Psoas muscle (tissue), 8 donors: ENCODE measurements at regions of chr1 and their contacts with region 1.

Region 1: DNA sequence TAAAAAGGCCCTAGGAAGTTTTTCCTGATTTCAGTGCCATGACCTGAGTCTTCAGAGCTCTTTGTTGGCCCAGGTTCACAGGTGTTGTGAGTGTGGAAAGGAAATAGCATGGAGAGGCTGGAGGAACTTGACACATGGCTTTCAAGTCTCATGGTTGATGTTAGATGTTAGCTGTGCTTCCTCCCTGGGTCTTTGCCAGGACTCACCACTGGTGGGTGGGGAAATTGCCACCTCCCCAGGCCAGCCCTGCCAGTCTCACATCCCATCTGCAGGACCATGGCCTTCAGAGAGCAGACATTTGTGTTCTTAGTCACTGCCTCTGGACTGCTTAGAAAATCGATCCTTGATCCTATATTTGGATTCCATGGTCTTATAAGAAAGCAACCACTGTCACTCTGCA is 383.2 kb downstream of the DISC1 start:
- DNase-seq: no peak
- ATAC-seq: no peak
- H3K4me3 ChIP-seq: no peak overlapping the region
- H3K27ac ChIP-seq: no peak overlapping the region
- H3K4me1 ChIP-seq: no peaks in the 10 kb centered on the region
- H3K27me3 ChIP-seq: no peaks in the 10 kb centered on the region
- CTCF ChIP-seq: no peak

Region 2: DNA sequence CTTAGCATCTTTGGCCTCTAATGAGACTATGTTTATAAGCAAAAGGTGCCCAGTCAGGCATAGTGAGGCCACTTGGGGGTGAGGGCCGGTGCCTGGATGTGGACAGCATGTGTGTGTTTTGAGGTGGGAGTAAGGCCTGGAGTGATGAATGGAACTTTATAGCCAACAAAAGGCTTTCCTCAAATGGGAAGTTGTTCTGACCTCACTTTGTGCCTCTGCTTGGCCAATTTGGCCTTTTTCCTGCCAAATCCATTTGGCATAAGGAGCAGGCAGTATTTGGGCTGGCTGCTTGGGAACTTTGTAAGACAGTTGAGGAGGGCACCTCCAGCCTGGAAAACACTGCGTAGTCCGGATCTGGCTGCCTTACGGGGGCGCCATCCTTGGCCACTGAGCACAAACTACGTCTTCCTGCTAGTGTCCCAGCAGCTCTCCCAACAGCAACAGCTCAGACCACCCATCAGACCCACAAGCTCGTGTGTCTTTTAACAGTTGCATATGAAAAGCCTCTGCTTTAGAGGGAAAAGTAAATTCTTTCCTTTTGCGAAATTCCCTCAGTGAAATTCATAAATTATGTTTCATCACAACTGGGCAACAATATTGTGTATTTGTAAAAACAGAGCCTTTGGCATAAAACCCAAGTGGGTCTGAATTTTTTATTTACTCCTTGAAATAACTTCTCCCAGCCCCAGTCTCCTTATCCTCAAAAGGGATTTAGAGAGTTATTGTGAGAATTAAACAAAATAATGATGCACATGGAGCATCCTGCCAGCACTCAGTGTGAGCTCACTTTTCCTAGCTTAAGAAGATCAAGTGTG is 60.3 kb before region 1 on chr1:
- intact Hi-C with region 1: no loop called
- DNase-seq: peak; percentile 44 to 72
- ATAC-seq: peak; percentile 34 to 71 (median 40)
- H3K4me3 ChIP-seq: no peak overlapping the region
- H3K27ac ChIP-seq: no peak overlapping the region
- H3K4me1 ChIP-seq: no peaks in the 10 kb centered on the region
- H3K27me3 ChIP-seq: no peaks in the 10 kb centered on the region
- CTCF ChIP-seq: no peak

Region 3: DNA sequence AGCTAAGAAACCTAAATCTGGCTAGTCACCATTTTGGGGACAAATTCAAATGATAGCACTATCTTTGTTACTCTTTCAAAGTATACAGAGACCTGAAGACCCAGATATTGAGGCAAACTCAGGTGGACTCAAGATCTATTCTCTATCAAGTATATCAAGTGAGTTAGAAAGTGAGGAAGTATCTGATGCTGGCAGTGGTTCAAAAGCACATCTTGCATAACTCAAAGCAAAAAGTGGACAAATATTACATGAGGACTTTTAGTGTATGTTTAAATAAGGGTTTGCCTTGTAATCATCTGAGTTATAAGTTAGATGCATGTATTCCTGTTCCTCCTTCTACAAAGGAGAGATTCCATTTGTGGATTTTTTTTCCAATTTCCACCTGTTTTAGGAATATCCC is 44.8 kb before region 1 on chr1:
- intact Hi-C with region 1: loop called in 1 of 2 experiments (anchors 1 kb)
- DNase-seq: no peak
- ATAC-seq: no peak
- H3K4me3 ChIP-seq: no peak overlapping the region
- H3K27ac ChIP-seq: no peak overlapping the region
- H3K4me1 ChIP-seq: no peaks in the 10 kb centered on the region
- H3K27me3 ChIP-seq: no peaks in the 10 kb centered on the region
- CTCF ChIP-seq: no peak

Region 4: GRCh38 chr1:232066521-232066920 is 56.8 kb after region 1 on chr1:
- intact Hi-C with region 1: no loop called
- DNase-seq: no peak
- ATAC-seq: no peak
- H3K4me3 ChIP-seq: no peak overlapping the region
- H3K27ac ChIP-seq: no peak overlapping the region
- H3K4me1 ChIP-seq: no peaks in the 10 kb centered on the region
- H3K27me3 ChIP-seq: peaks cover 0 to 2% (median 0%) of the 10 kb centered on the region in 3 donors
- CTCF ChIP-seq: no peak

Region 5: DNA sequence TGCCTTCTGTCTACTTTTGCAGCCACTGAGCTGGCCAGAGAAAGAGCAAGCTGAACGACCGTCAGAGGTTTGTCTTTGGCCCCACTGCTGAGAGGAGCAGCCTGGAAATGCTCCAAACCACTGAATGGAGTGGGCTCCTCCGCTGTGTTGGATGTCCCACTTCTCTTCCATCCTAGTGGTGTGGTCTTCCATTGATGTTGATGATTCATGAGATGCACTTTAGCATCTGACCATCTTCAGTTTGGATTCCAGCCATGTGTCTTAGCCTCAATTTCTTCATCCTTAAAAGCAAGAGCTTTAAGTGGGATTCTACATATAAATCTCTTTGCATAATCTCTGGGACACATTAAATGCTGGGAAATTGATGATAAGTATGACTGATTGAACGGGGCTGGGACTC is 343.3 kb after region 1 on chr1:
- intact Hi-C with region 1: no loop called
- DNase-seq: no peak
- ATAC-seq: no peak
- H3K4me3 ChIP-seq: no peak overlapping the region
- H3K27ac ChIP-seq: no peak overlapping the region
- H3K4me1 ChIP-seq: no peaks in the 10 kb centered on the region
- H3K27me3 ChIP-seq: no peaks in the 10 kb centered on the region
- CTCF ChIP-seq: no peak